ENCODE measurements at regions of chr2 and their contacts with region 1.

Region 1: DNA sequence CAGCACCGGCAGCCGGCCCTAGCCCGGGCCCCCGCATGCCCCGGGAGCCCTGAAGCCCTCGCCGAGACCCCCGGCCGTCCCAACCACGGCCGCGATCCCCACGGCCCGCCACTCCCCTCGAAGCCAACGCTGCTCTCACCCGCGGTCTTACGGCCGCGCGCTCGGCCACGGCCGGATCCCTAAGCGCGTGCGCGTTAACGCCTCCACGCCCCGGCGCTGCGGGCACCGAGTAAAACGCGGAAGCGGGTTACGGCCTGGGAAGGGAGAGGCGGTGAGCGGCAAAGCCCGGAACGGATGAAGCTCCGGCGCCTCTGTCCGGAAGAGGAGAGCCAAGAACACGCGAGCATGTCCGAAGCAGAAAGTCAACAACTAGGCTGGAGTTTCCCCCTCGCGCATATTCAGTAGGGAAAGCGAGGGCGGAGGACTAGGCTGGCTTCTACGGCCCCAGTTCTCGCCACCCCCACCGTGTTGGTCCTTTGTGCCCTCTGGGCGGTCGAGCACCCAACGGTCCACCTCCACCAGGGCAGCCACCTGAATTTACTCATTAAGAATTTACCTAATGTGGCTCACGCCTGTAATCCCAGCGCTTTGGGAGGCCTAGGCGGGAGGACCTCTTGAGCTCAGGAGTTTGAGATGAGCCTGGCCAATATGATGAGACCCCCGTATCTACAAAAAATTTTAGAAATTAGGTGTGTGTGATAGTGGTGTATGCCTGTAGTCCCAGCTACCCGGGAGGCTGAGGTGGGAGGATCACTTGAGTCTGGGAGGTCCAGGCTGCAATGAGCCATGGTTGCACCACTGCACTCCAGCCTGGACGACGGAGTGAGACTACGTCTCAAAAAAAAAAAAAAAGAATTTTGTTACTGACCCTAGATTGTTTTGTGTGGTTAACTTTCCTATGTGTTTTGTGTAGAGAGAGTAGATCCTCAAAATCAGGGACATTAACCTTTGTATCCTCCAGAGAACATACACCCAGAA is at the start of gene KANSL3:
- DNase-seq: peak; percentile 96
- ATAC-seq: peak; percentile 93
- total RNA-seq, gene KANSL3: 31.9 TPM

Region 2: DNA sequence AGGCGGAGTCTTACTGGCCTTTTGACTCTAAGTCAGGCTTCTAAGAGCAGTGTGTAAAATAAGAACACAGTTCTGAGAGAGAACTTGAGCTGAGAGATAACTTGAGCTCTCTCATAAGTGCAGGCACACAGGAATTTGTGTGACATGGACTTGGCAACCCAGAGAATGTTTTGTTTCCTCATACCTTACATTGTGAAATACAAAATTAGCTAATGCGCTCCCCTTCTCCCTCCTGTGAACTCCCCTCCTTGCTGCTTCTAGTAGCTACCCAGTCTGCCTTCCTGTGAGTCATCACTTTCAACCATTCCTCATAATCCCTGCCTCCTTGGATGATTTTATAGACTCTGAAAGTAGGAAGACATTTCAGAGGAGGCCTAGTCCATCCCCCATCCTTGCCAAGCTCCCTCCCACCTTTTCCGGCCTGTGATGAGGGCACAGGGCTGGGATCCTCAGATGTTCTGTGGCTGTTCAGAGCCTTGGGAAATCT is 26.7 kb after region 1 on chr2:
- intact Hi-C with region 1: loop called (anchors 2 kb)
- DNase-seq: no peak
- ATAC-seq: peak; percentile 80

Region 3: DNA sequence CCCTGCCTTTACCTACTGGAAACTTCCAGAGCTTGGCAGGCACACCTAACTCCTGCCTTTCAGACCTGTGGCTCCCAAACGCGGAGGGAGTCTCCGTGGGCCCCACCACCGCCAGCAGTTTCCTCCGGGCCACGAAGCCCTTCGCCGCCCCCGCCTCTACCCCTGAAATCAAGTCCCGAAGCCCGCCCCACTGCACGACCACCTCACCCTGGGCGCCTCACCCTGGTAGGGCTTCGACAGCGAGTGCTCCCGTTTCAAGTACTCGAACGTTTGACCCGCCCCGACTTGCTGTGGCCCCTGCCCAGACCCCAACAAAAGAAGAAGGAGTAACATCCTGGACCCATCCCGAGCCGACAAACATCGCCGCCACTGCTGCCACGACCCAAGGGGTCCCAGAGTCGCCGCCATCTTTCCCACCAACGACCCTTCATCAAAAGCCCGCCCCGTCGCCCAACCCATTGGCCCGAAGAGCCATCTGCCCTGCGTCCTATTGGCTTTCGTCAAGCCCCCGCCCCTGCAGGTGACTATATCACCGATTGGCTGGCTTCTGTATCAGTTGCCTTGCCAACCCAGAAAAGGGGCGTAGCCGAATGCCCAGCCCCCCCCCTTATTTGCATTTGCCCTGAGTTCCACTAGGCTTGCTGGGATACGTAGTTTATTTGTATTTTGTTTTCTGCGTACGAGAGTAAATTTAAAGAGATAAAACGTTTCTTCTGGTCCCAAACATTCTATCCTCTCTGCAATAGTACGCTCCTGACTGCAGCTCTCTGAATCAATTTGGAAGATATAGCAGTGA is 101.4 kb after region 1 on chr2 and contains the start of gene LMAN2L:
- intact Hi-C with region 1: loop called (anchors 2 kb)
- DNase-seq: peak; percentile 98
- ATAC-seq: peak; percentile 98
- total RNA-seq, gene LMAN2L: 26.2 TPM

Region 4: GRCh38 chr2:96760036-96760985 is 121.9 kb after region 1 on chr2 and contains the start of gene CNNM4:
- intact Hi-C with region 1: loop called (anchors 1 kb)
- DNase-seq: peak; percentile 98
- ATAC-seq: peak; percentile 97
- total RNA-seq, gene CNNM4: 33.3 TPM

Measured in Right ventricle myocardium inferior (tissue), 1 donor.